ENCODE measurements at regions of chr14 and their contacts with region 1.

Region 1: DNA sequence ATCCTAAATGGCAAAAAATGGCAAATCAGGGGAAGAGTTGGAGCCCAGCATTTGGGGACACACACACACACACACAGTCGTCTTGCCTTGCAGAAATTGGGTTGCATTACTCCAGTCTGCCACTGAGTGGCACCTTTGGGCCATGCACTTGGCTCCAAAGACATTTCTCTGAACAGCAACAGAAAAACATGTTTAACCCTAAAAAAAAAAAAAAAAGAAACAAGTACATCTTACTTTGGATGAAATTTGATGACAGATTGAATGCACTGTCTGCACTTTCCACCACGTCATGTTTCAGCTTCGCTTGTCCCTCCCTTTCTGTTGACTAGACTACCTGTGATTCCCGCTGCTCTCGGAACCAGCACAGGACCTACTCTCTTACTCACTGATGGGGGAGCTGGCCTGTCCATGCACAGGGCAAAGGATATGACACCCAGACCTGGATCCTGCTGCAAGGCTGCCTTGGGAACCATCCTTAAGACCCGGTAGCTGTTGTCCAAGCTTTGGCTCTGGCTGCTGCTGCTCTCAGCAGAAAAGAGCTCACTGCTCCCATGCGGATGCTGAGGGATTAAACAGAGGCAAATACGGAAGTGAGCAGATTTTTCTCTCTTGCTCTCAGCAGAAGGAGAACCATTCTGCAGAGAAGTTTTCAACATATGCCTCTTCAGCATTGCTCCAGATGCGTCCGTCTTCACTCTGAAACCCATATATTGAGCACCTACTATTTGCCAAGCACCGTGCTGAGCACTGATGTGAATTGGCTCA is 376.8 kb downstream of the DPF3 start:
- DNase-seq: peak; percentile 95
- ATAC-seq: peak; percentile 64
- H3K4me3 ChIP-seq: no peak overlapping the region
- H3K27ac ChIP-seq: no peak overlapping the region
- H3K4me1 ChIP-seq: peaks cover 18% of the 10 kb centered on the region
- H3K27me3 ChIP-seq: no peaks in the 10 kb centered on the region
- CTCF ChIP-seq: peak; percentile 98

Region 2: GRCh38 chr14:72643317-72643801 is 126.2 kb after region 1 on chr14:
- CTCF ChIA-PET with region 1: no interaction called
- POLR2A ChIA-PET with region 1: no interaction called
- intact Hi-C with region 1: loop called (anchors 2 kb)
- DNase-seq: peak; percentile 98
- ATAC-seq: peak; percentile 99
- H3K4me3 ChIP-seq: no peak overlapping the region
- H3K27ac ChIP-seq: peak overlapping the region; percentile 76
- H3K4me1 ChIP-seq: peaks cover 55% of the 10 kb centered on the region
- H3K27me3 ChIP-seq: no peaks in the 10 kb centered on the region
- CTCF ChIP-seq: no peak; the same call in 1 of the 2 replicates

Region 3: DNA sequence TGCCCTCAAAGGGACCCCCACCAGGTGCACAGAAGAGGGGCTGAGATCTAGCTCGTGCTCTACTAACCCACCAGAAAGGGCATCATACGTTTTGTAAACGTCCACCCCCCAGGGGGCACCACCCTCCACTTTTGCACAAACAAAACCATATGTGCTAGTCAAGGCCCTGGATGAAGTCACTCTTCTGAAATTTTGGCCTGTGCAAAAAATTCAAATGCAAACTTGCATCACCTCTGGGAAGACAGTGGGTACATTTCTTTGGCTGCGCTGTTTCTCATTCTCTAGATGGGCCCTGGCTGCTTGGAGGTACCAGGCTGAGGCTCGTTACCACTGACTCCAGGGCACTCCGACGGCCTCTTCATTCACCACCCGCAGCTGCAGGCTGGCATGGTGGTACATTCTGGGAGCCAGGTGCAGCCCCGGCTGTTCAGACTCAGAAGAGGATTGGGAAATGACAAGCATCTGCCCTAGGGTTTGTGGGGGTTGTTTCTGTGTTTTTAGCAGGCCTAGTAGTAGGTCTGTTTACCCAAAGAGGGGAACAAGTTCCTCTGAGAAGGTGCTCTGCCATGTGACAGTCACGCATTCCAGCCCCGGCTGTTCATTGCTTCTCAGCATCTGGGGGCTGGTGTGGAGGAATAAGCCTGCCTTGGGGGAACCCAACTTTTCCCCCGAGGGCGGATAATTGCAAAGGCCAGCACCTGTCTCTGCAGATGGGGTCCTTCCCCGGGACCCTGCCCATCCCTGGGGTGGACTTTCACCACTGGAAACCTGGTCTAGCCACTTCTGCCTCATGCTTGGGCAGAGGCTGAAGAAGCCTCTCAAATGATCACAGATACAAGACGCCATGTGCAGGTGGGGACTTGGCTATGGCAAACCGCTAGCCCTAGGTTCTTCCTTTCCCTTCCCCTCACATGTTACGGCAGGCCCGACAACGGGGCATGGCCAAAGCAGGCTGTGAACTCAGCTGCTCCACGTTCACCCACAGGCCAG is 229.2 kb after region 1 on chr14:
- CTCF ChIA-PET with region 1: interaction called, 4 read pairs
- POLR2A ChIA-PET with region 1: no interaction called
- intact Hi-C with region 1: loop called (anchors 2 kb)
- DNase-seq: peak; percentile 48
- ATAC-seq: peak; percentile 41
- H3K4me3 ChIP-seq: no peak overlapping the region
- H3K27ac ChIP-seq: peak overlapping the region; percentile 67
- H3K4me1 ChIP-seq: peaks cover 27% of the 10 kb centered on the region
- H3K27me3 ChIP-seq: no peaks in the 10 kb centered on the region
- CTCF ChIP-seq: peak; percentile 36

Region 4: DNA sequence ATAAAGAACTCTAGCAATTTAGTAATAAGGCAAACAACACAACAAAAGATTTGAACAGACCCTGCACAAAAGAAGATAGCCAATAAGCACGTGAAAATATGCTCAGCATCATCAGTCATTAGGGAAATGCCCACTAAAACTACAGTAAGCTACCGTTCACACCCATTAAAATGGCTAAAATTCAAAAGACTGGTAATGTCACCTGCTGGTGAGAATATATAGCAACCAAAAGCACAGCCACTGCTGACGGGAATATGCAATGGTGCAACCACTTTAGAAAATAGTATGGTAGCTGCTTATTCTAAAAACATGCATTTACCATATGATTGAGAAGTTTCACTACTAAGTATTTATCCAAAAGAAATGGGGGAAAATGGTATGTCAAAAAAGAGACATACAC is 301.9 kb after region 1 on chr14:
- CTCF ChIA-PET with region 1: interaction called, 12 read pairs
- POLR2A ChIA-PET with region 1: no interaction called
- intact Hi-C with region 1: loop called (anchors 1 kb)
- DNase-seq: peak; percentile 21
- ATAC-seq: no peak; the same call in 1 of the 2 replicates
- H3K4me3 ChIP-seq: no peak overlapping the region
- H3K27ac ChIP-seq: no peak overlapping the region
- H3K4me1 ChIP-seq: no peaks in the 10 kb centered on the region
- H3K27me3 ChIP-seq: no peaks in the 10 kb centered on the region
- CTCF ChIP-seq: peak; percentile 52

Region 5: GRCh38 chr14:72948481-72949138 is 431.5 kb after region 1 on chr14:
- CTCF ChIA-PET with region 1: interaction called, 39 read pairs
- POLR2A ChIA-PET with region 1: no interaction called
- intact Hi-C with region 1: loop called (anchors 1 kb)
- DNase-seq: peak; percentile 86
- ATAC-seq: peak; percentile 38
- H3K4me3 ChIP-seq: no peak overlapping the region
- H3K27ac ChIP-seq: no peak overlapping the region
- H3K4me1 ChIP-seq: peaks cover 17% of the 10 kb centered on the region
- H3K27me3 ChIP-seq: no peaks in the 10 kb centered on the region
- CTCF ChIP-seq: peak; percentile 99

Region 6: GRCh38 chr14:73069585-73069984 is 552.5 kb after region 1 on chr14:
- CTCF ChIA-PET with region 1: no interaction called
- POLR2A ChIA-PET with region 1: interaction called, 12 read pairs
- intact Hi-C with region 1: no loop called
- DNase-seq: no peak
- ATAC-seq: no peak
- H3K4me3 ChIP-seq: no peak overlapping the region
- H3K27ac ChIP-seq: no peak overlapping the region
- H3K4me1 ChIP-seq: peaks cover 9% of the 10 kb centered on the region
- H3K27me3 ChIP-seq: no peaks in the 10 kb centered on the region
- CTCF ChIP-seq: no peak